ENCODE measurements at regions of chr16 and their contacts with region 1.

Region 1: GRCh38 chr16:84484579-84485254 is 19.7 kb downstream of the MEAK7 start:
- H3K4me3 Mint-ChIP-seq: no peak overlapping the region
- H3K27ac Mint-ChIP-seq: no peak overlapping the region
- H3K4me1 Mint-ChIP-seq: no peaks in the 10 kb centered on the region
- H3K27me3 Mint-ChIP-seq: no peaks in the 10 kb centered on the region

Region 2: DNA sequence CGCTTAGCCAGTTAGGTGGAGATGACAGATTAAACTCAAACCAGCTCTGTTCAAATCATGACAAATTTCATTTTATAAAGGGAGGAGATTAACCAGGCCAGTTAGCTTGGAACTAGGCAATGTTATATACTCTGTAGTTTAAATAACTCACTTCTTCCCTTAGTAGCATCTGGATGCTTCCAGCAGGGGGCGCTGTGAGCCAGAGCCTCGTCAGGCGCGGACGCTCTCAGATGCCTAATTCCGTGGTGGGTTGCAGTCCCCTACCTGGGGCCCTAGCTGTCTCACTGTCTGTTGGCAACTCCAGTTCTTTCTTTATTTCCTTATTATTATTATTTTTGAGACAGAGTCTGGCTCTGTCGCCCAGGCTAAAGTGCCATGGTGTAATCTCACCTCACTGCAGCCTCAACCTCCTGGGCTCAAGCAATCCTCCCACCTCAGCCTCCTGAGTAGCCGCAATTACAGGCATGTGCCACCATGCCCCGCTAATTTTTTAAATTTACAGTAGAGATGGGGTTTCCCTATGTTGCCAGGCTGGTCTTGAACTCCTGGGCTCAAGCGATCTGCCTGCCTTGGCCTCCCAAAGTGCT is 207.4 kb before region 1 on chr16:
- intact Hi-C with region 1: loop called (anchors 1 kb)
- H3K4me3 Mint-ChIP-seq: no peak overlapping the region
- H3K27ac Mint-ChIP-seq: no peak overlapping the region
- H3K4me1 Mint-ChIP-seq: no peaks in the 10 kb centered on the region
- H3K27me3 Mint-ChIP-seq: peaks cover 8% of the 10 kb centered on the region

Region 3: GRCh38 chr16:84471316-84471715 is 13.4 kb before region 1 on chr16:
- intact Hi-C with region 1: no loop called
- H3K4me3 Mint-ChIP-seq: no peak overlapping the region
- H3K27ac Mint-ChIP-seq: no peak overlapping the region
- H3K4me1 Mint-ChIP-seq: no peaks in the 10 kb centered on the region
- H3K27me3 Mint-ChIP-seq: no peaks in the 10 kb centered on the region